Endothelial cell of umbilical vein (primary cell): ENCODE measurements at regions of chr13 and their contacts with region 1.

Region 1: DNA sequence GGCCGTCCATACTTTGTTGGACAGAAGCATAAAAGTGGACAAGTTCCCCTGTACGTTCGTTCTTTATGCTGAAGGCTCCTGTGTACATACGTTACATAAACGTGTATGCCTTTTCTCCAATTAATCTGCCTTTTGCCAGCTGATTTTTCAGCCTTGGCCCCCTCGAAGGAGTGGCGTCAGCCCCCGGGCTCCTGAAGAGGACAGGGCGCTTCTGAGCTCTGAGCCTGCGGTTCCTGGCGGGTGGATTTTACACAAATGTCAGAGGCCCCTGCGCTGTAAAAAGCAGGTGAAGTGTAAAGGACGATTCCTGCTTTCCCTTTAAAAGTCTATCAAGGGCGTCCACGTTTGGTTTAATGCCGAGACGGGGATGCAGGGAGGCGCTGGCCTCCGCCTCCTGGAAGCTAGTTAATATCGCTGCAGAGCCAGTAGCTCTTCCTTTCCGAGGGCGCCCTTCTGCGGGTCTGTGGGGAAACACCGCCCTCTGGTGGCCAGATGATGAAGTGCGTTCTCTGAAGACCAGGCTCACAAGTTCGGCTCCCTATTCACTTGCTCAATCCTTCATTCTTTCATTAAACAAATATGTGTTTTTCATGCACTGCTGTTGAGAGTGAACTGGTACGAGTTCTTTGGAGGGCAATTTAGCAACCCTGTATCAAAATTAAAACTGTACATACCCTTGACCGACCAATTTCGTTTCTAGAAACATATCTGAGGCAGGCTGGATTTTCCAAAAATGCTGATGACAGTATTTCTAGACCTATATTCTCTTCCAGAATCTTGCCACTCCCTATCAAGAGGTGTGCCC is 62.0 kb downstream of the GPR12 start:
- DNase-seq: peak; percentile 88
- H3K4me3 ChIP-seq: no peak overlapping the region
- H3K27ac ChIP-seq: no peak overlapping the region
- H3K4me1 ChIP-seq: no peaks in the 10 kb centered on the region
- H3K27me3 ChIP-seq: peaks cover 0 to 4% of the 10 kb centered on the region in 2 experiments
- CTCF ChIP-seq: peak; percentile 89 to 92
- POLR2A ChIP-seq: no peak

Region 2: GRCh38 chr13:26202365-26202972 is 496.1 kb before region 1 on chr13:
- CTCF ChIA-PET with region 1: interaction called, 14 read pairs
- POLR2A ChIA-PET with region 1: no interaction called
- dilution Hi-C with region 1: no loop called
- intact Hi-C with region 1: no loop called
- DNase-seq: peak; percentile 44
- H3K4me3 ChIP-seq: no peak overlapping the region
- H3K27ac ChIP-seq: no peak overlapping the region
- H3K4me1 ChIP-seq: peaks cover 6% of the 10 kb centered on the region
- H3K27me3 ChIP-seq: no peaks in the 10 kb centered on the region
- CTCF ChIP-seq: no peak
- POLR2A ChIP-seq: no peak

Region 3: GRCh38 chr13:26377038-26377437 is 321.6 kb before region 1 on chr13:
- CTCF ChIA-PET with region 1: interaction called, 22 read pairs
- POLR2A ChIA-PET with region 1: no interaction called
- dilution Hi-C with region 1: no loop called
- intact Hi-C with region 1: loop called (anchors 1 kb)
- DNase-seq: peak; percentile 20
- H3K4me3 ChIP-seq: no peak overlapping the region
- H3K27ac ChIP-seq: no peak overlapping the region
- H3K4me1 ChIP-seq: no peaks in the 10 kb centered on the region
- H3K27me3 ChIP-seq: no peaks in the 10 kb centered on the region
- CTCF ChIP-seq: peak; percentile 13 to 45
- POLR2A ChIP-seq: no peak

Region 4: GRCh38 chr13:26502826-26503225 is 195.8 kb before region 1 on chr13:
- CTCF ChIA-PET with region 1: interaction called, 213 read pairs
- POLR2A ChIA-PET with region 1: no interaction called
- dilution Hi-C with region 1: loop called (anchors 25 kb)
- intact Hi-C with region 1: loop called (anchors 1 kb)
- DNase-seq: peak; percentile 58
- H3K4me3 ChIP-seq: no peak overlapping the region
- H3K27ac ChIP-seq: no peak overlapping the region
- H3K4me1 ChIP-seq: peaks cover 7% of the 10 kb centered on the region
- H3K27me3 ChIP-seq: no peaks in the 10 kb centered on the region
- CTCF ChIP-seq: peak in 1 of 2 donors; percentile 29
- POLR2A ChIP-seq: no peak

Region 5: GRCh38 chr13:26557393-26558023 is 141.1 kb before region 1 on chr13 and contains the start of gene WASF3:
- CTCF ChIA-PET with region 1: interaction called, 31 read pairs
- POLR2A ChIA-PET with region 1: interaction called, 3 read pairs
- dilution Hi-C with region 1: no loop called
- intact Hi-C with region 1: loop called (anchors 2 kb)
- DNase-seq: peak; percentile 95
- H3K4me3 ChIP-seq: peak within 1 kb of the TSS; percentile 84 to 94 (median 85)
- H3K27ac ChIP-seq: peak within 1 kb of the TSS; percentile 20
- H3K4me1 ChIP-seq: peaks cover 29% of the 10 kb centered on the region
- H3K27me3 ChIP-seq: peaks cover 0 to 18% of the 10 kb centered on the region in 2 experiments
- CTCF ChIP-seq: no peak
- POLR2A ChIP-seq: peak; percentile 73
- total RNA-seq, gene WASF3: 29.7 and 32.4 TPM in 2 replicates

Region 6: DNA sequence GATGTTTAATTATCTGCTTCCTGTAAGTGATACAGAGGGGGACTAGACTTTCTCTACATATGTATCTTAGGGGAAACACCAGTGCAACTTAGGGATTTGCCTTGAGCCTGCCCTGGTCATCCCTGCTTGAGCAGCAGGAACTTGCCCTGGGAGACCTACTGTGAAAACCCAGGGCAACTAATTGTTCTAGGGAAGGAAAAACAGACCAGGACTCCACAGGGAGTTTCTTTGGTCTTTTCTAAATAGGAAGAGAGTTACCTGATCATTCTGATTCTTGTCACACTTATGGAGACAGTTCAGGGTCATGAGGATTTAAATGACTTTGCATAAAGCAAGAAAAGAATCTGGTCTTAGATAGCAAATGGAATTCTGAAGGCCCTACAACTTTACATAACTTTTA is 52.0 kb before region 1 on chr13:
- CTCF ChIA-PET with region 1: interaction called, 19 read pairs
- POLR2A ChIA-PET with region 1: no interaction called
- dilution Hi-C with region 1: no loop called
- intact Hi-C with region 1: no loop called
- DNase-seq: no peak
- H3K4me3 ChIP-seq: no peak overlapping the region
- H3K27ac ChIP-seq: no peak overlapping the region
- H3K4me1 ChIP-seq: no peaks in the 10 kb centered on the region
- H3K27me3 ChIP-seq: no peaks in the 10 kb centered on the region
- CTCF ChIP-seq: no peak
- POLR2A ChIP-seq: no peak

Region 7: GRCh38 chr13:26688286-26688685 is 10.3 kb before region 1 on chr13:
- CTCF ChIA-PET with region 1: interaction called, 36 read pairs
- POLR2A ChIA-PET with region 1: no interaction called
- dilution Hi-C with region 1: no loop called
- intact Hi-C with region 1: no loop called
- DNase-seq: no peak
- H3K4me3 ChIP-seq: no peak overlapping the region
- H3K27ac ChIP-seq: no peak overlapping the region
- H3K4me1 ChIP-seq: no peaks in the 10 kb centered on the region
- H3K27me3 ChIP-seq: no peaks in the 10 kb centered on the region
- CTCF ChIP-seq: no peak
- POLR2A ChIP-seq: no peak

Region 8: DNA sequence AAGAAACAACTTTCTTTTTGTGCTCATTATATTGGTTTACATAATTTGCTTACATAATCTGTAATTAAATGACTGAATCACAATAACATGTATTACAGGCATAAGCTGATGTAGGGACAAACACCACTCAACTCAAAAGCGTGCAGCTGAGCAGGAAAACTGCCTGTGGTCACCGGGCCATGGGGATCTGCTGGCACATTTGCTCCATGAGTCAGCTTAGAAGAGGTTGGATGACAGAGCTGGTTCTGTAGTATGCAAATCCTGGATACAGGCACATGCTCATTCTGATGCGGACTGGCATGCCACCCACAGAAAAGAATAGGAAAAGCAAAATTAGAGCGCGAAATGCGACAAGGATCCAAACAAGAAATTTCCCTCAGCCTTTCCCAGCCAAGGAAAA is 344.4 kb after region 1 on chr13:
- CTCF ChIA-PET with region 1: no interaction called
- POLR2A ChIA-PET with region 1: no interaction called
- dilution Hi-C with region 1: no loop called
- intact Hi-C with region 1: no loop called
- DNase-seq: peak; percentile 64
- H3K4me3 ChIP-seq: no peak overlapping the region
- H3K27ac ChIP-seq: no peak overlapping the region
- H3K4me1 ChIP-seq: no peaks in the 10 kb centered on the region
- H3K27me3 ChIP-seq: no peaks in the 10 kb centered on the region
- CTCF ChIP-seq: no peak
- POLR2A ChIP-seq: no peak

Region 9: DNA sequence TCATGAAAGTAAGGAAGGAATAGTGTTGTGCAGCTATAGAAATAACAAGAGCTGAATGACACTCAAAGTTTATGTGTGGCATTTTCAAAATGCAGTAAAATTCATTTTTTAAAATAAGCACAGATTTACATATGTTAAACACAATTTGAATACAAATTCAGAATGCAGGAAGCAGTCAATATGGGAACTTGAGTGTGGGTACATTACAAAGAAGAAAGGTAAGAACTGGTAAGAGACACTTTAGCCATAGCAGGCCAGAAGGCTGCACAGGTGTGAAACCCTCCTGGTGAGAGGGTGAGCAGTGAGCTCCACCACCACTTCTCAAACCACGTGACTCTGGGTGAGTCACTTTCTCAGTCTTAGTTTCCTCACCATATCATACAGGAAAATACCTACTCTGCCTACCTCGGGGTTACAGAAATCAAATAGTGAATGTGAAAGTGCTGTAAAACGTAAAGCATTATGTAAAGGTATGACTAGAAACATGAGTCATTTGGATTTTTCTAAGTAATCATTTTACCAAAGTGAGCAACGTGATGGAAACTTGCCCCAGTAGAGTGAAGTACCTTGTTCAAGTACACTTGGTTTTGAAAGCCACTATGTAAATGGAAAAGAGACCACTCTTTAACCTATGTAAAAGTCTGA is 432.5 kb after region 1 on chr13:
- CTCF ChIA-PET with region 1: no interaction called
- POLR2A ChIA-PET with region 1: no interaction called
- dilution Hi-C with region 1: no loop called
- intact Hi-C with region 1: no loop called
- DNase-seq: peak; percentile 16
- H3K4me3 ChIP-seq: no peak overlapping the region
- H3K27ac ChIP-seq: peak overlapping the region; percentile 17
- H3K4me1 ChIP-seq: peaks cover 26% of the 10 kb centered on the region
- H3K27me3 ChIP-seq: no peaks in the 10 kb centered on the region
- CTCF ChIP-seq: no peak
- POLR2A ChIP-seq: no peak